Tibial artery (tissue), 4 donors: ENCODE measurements at regions of chr10 and their contacts with region 1.

Region 1: GRCh38 chr10:18140149-18140956 is at the start of gene CACNB2:
- DNase-seq: peak; percentile 60 to 89
- H3K4me3 ChIP-seq: peak within 1 kb of the TSS; percentile 72 to 92
- H3K27ac ChIP-seq: peak within 1 kb of the TSS; percentile 89 to 96
- H3K4me1 ChIP-seq: peaks cover 0 to 37% (median 15%) of the 10 kb centered on the region in 4 donors
- H3K27me3 ChIP-seq: no peaks in the 10 kb centered on the region
- CTCF ChIP-seq: peak in 1 of 2 experiments; percentile 13

Region 2: DNA sequence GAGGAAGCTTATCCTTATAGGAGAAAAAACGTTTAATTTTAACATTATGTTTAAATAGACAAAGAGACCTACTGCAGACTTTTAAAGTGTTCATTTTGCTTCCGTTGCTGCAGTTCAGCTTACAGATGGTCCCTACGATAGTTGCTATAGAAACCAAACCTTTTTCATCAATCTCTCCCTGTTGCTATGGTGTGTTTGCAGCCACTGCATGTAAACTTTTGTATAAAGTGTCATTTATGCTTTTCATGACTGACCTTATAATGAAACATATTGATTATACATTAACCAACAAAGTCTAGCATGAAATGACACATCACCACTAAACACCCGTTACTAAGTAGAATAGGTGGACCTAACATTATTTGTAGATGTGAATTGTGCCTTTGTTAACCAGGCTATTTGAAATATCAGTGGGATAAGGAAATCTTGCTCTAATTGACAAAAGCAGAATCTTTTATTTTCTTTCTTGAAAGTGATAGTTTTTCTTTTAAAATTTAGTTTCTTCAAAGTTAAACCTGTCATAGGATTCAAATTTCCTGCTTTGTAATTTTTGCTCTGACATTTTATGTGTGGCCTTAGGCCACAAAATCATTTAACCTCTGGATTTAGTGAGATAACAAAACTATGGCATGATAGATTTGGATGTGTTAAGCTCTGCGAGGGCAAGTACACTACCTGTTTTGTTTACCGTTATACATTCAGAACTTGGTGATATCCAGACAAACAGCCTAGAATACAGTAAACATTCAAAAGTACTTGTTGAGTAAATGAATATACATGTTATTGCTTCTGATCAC is 63.9 kb after region 1 on chr10:
- intact Hi-C with region 1: loop called (anchors 10 kb)
- DNase-seq: no peak
- H3K4me3 ChIP-seq: no peak overlapping the region
- H3K27ac ChIP-seq: no peak overlapping the region
- H3K4me1 ChIP-seq: peaks cover 0 to 18% (median 0%) of the 10 kb centered on the region in 4 donors
- H3K27me3 ChIP-seq: no peaks in the 10 kb centered on the region
- CTCF ChIP-seq: no peak